Heart left ventricle (tissue), 16 donors: ENCODE measurements at regions of chr2 and their contacts with region 1.

Region 1: GRCh38 chr2:6589150-6589549 is 276.6 kb downstream of the CMPK2 start:
- DNase-seq: no peak
- ATAC-seq: no peak
- H3K4me3 ChIP-seq: no peak overlapping the region
- H3K27ac ChIP-seq: no peak overlapping the region
- H3K4me1 ChIP-seq: no peaks in the 10 kb centered on the region
- H3K27me3 ChIP-seq: no peaks in the 10 kb centered on the region
- CTCF ChIP-seq: no peak
- POLR2A ChIP-seq: no peak

Region 2: DNA sequence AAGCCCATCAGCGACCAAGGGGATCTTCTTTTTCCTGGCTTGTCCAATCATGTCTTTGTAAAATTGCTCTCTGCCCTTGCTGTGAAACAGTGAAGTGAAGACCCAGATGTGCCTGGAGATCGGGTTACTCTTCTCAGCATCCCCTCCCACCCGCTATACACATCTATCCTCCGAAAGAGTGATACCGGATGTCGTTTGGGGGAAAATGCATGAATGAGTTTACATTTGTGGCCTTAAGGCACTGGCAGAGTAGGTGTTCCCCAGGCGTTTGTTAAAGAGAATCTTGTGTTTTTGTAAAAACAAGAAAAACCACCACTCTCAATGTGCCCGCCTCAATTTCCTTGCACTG is 251.7 kb before region 1 on chr2:
- intact Hi-C with region 1: no loop called
- DNase-seq: no peak
- ATAC-seq: no peak
- H3K4me3 ChIP-seq: no peak overlapping the region
- H3K27ac ChIP-seq: no peak overlapping the region
- H3K4me1 ChIP-seq: no peaks in the 10 kb centered on the region
- H3K27me3 ChIP-seq: no peaks in the 10 kb centered on the region
- CTCF ChIP-seq: no peak
- POLR2A ChIP-seq: no peak

Region 3: GRCh38 chr2:6639929-6640625 is 50.9 kb after region 1 on chr2:
- intact Hi-C with region 1: loop called in 1 of 10 experiments (anchors 5 kb)
- DNase-seq: no peak
- ATAC-seq: no peak
- H3K4me3 ChIP-seq: no peak overlapping the region
- H3K27ac ChIP-seq: no peak overlapping the region
- H3K4me1 ChIP-seq: no peaks in the 10 kb centered on the region
- H3K27me3 ChIP-seq: peaks cover 0 to 15% (median 0%) of the 10 kb centered on the region in 9 donors
- CTCF ChIP-seq: no peak
- POLR2A ChIP-seq: no peak